ENCODE measurements at regions of chr17 and their contacts with region 1.

Region 1: GRCh38 chr17:43909537-43910231 is 2.3 kb upstream of the MPP2 start:
- DNase-seq: no peak
- ATAC-seq: no peak
- H3K4me3 ChIP-seq: no peak overlapping the region
- H3K27ac ChIP-seq: no peak overlapping the region
- H3K4me1 ChIP-seq: peaks cover 10 to 29% of the 10 kb centered on the region in 2 donors
- H3K27me3 ChIP-seq: peaks cover 27 to 35% (median 35%) of the 10 kb centered on the region in 3 donors
- CTCF ChIP-seq: no peak
- POLR2A ChIP-seq: no peak

Region 2: GRCh38 chr17:43994272-43995149 is 84.8 kb after region 1 on chr17:
- in situ Hi-C with region 1: no loop called
- intact Hi-C with region 1: loop called (anchors 1 kb)
- DNase-seq: peak; percentile 34 to 44
- ATAC-seq: peak; percentile 81 to 86
- H3K4me3 ChIP-seq: peak overlapping the region; percentile 18 to 46 (median 35)
- H3K27ac ChIP-seq: no peak overlapping the region
- H3K4me1 ChIP-seq: peaks cover 3 to 8% of the 10 kb centered on the region in 2 donors
- H3K27me3 ChIP-seq: peaks cover 6 to 9% (median 9%) of the 10 kb centered on the region in 3 donors
- CTCF ChIP-seq: peak; percentile 81 to 91 (median 88)
- POLR2A ChIP-seq: no peak